Vagina (tissue), 2 donors: ENCODE measurements at regions of chr20 and their contacts with region 1.

Region 1: GRCh38 chr20:63009045-63009961 is 2.5 kb upstream of the BHLHE23 start:
- DNase-seq: no peak
- H3K4me3 ChIP-seq: no peak overlapping the region
- H3K27ac ChIP-seq: no peak overlapping the region
- H3K4me1 ChIP-seq: peaks cover 35% of the 10 kb centered on the region
- H3K27me3 ChIP-seq: peaks cover 27% of the 10 kb centered on the region
- CTCF ChIP-seq: peak; percentile 82 to 91 (median 90)
- POLR2A ChIP-seq: no peak

Region 2: GRCh38 chr20:61560361-61560853 is 1448.9 kb before region 1 on chr20:
- intact Hi-C with region 1: no loop called
- DNase-seq: no peak
- H3K4me3 ChIP-seq: no peak overlapping the region
- H3K27ac ChIP-seq: no peak overlapping the region
- H3K4me1 ChIP-seq: no peaks in the 10 kb centered on the region
- H3K27me3 ChIP-seq: no peaks in the 10 kb centered on the region
- CTCF ChIP-seq: no peak
- POLR2A ChIP-seq: no peak

Region 3: GRCh38 chr20:62401331-62401779 is 607.9 kb before region 1 on chr20:
- intact Hi-C with region 1: no loop called
- DNase-seq: no peak
- H3K4me3 ChIP-seq: no peak overlapping the region
- H3K27ac ChIP-seq: no peak overlapping the region
- H3K4me1 ChIP-seq: peaks cover 20% of the 10 kb centered on the region
- H3K27me3 ChIP-seq: no peaks in the 10 kb centered on the region
- CTCF ChIP-seq: no peak
- POLR2A ChIP-seq: no peak

Region 4: DNA sequence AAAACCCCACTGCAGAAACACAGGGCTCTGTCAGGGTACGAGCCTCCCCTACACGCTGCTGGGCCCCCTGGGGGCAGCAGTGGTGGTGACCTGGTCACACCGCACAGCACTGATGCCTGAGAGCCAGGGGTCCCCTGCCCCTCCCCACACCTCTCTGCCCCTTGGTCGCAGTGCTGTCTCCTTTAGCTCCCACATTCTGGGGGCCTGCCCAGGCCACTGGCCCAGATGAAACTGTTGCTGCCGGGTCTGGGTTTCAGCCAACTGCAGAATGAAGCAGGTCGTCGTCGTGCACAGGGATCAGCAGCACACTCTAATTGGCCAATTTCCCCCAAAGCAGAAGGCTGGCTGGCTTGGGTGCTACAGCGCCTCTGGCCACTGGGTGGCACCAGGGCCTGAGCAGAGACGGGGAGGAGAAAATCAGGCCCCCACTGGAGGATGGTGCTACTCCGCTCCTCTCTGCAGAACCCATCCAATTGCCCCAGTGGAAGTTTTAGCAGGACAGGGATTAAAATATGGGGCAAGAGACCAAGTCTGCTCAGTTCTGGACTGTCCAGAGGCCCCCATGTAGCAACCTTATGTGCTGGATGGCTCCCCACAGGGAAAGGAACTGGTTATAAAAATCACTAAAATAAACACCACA is 109.1 kb before region 1 on chr20:
- intact Hi-C with region 1: loop called (anchors 5 kb)
- DNase-seq: no peak
- H3K4me3 ChIP-seq: no peak overlapping the region
- H3K27ac ChIP-seq: peak overlapping the region; percentile 41
- H3K4me1 ChIP-seq: peaks cover 33% of the 10 kb centered on the region
- H3K27me3 ChIP-seq: no peaks in the 10 kb centered on the region
- CTCF ChIP-seq: peak; percentile 66 to 85 (median 73)
- POLR2A ChIP-seq: no peak

Region 5: GRCh38 chr20:62937366-62938104 is 71.8 kb before region 1 on chr20:
- intact Hi-C with region 1: no loop called
- DNase-seq: peak in 1 of 2 donors; percentile 96
- H3K4me3 ChIP-seq: peak overlapping the region; percentile 91 to 97
- H3K27ac ChIP-seq: peak overlapping the region; percentile 86
- H3K4me1 ChIP-seq: peaks cover 76% of the 10 kb centered on the region
- H3K27me3 ChIP-seq: no peaks in the 10 kb centered on the region
- CTCF ChIP-seq: peak in 1 of 3 experiments; percentile 37
- POLR2A ChIP-seq: peak in 1 of 2 donors; percentile 48